Common myeloid progenitor, CD34-positive (primary cell): ENCODE measurements at regions of chr1 and their contacts with region 1.

Region 1: DNA sequence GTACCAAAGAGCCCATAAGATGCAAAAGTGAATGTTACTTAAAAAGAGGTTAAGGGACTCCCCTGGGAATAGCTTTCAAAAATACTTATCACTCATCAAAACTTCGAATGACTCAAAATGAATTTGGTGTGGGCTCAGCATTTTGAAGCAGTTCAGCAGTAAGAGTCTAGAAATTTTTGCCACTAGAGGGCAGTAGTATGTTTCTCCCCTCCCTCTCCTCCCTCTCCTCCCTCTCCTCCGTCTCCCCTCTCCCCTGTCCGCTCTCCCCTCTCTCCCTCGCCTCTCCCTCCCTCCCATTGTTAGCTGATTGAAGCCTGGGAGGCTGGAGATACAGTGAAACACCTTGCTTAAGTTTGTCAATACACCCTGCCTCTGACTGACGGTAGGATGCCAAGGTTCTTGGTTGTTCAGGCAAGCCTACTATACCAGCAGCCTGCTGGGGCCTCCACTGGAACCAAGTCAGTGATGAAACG is 70.8 kb upstream of the TENT5C start:
- DNase-seq: peak; percentile 65 to 79 (median 77)
- H3K4me3 ChIP-seq: peak overlapping the region in 1 of 7 experiments; percentile 27
- H3K27ac ChIP-seq: no peak overlapping the region
- H3K4me1 ChIP-seq: no peaks in the 10 kb centered on the region
- H3K27me3 ChIP-seq: peaks cover 0 to 3% (median 0%) of the 10 kb centered on the region in 5 experiments

Region 2: DNA sequence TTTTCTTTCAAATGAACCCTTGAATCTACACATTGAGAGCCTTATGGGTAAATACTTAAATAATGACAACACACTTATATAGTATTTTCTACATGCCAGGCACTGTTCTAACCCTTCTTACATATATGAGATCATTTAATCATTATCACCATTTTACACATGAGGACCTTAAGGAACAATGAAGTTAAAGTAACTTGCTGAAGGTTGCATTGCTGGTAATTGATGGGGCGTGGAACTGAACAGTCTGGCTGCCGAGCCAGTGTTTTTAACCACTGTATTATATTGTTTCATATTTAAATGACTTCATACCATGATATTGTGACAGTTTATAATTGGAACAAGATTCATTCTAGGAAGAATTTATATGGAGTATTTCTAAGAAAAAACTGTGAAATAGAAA is 41.1 kb before region 1 on chr1:
- CTCF ChIA-PET with region 1: no interaction called
- POLR2A ChIA-PET with region 1: no interaction called
- DNase-seq: no peak
- H3K4me3 ChIP-seq: no peak overlapping the region
- H3K27ac ChIP-seq: no peak overlapping the region
- H3K4me1 ChIP-seq: no peaks in the 10 kb centered on the region
- H3K27me3 ChIP-seq: no peaks in the 10 kb centered on the region

Region 3: DNA sequence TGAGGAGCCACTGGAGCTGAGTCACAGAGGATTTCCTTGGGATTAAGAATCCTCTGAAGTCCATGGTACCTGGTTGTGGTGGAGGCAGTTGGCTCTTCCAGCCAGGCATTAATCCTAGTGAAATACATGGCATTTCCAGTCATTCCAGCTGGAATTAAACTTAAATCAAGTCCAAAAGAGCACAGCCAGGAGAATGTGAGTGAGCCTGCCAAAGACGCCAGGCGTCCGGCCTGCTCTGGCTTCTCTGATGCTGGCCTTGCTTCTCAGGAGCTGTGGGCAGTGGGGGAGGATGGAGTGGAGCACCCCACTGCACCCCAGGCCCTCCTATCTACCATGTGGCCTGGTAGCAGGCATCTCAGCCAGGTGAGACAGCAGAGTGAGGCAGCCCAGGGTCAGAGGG is 47.4 kb after region 1 on chr1:
- CTCF ChIA-PET with region 1: interaction called, 10 read pairs
- POLR2A ChIA-PET with region 1: no interaction called
- DNase-seq: no peak
- H3K4me3 ChIP-seq: no peak overlapping the region
- H3K27ac ChIP-seq: no peak overlapping the region
- H3K4me1 ChIP-seq: no peaks in the 10 kb centered on the region
- H3K27me3 ChIP-seq: no peaks in the 10 kb centered on the region

Region 4: GRCh38 chr1:117674521-117675397 is 139.7 kb after region 1 on chr1:
- CTCF ChIA-PET with region 1: interaction called, 95 read pairs
- POLR2A ChIA-PET with region 1: no interaction called
- DNase-seq: peak; percentile 39 to 63 (median 58)
- H3K4me3 ChIP-seq: no peak overlapping the region
- H3K27ac ChIP-seq: no peak overlapping the region
- H3K4me1 ChIP-seq: peaks cover 0 to 2% (median 0%) of the 10 kb centered on the region in 4 experiments
- H3K27me3 ChIP-seq: no peaks in the 10 kb centered on the region

Region 5: GRCh38 chr1:117683571-117684285 is 148.7 kb after region 1 on chr1:
- CTCF ChIA-PET with region 1: interaction called, 17 read pairs
- POLR2A ChIA-PET with region 1: no interaction called
- DNase-seq: no peak
- H3K4me3 ChIP-seq: no peak overlapping the region
- H3K27ac ChIP-seq: no peak overlapping the region
- H3K4me1 ChIP-seq: peaks cover 0 to 3% (median 0%) of the 10 kb centered on the region in 4 experiments
- H3K27me3 ChIP-seq: no peaks in the 10 kb centered on the region

Region 6: GRCh38 chr1:117895482-117896114 is 360.6 kb after region 1 on chr1:
- CTCF ChIA-PET with region 1: interaction called, 12 read pairs
- POLR2A ChIA-PET with region 1: no interaction called
- DNase-seq: peak; percentile 61 to 82 (median 74)
- H3K4me3 ChIP-seq: no peak overlapping the region
- H3K27ac ChIP-seq: no peak overlapping the region
- H3K4me1 ChIP-seq: no peaks in the 10 kb centered on the region
- H3K27me3 ChIP-seq: no peaks in the 10 kb centered on the region